Heart left ventricle (tissue), 16 donors: ENCODE measurements at regions of chr17 and their contacts with region 1.

Region 1: DNA sequence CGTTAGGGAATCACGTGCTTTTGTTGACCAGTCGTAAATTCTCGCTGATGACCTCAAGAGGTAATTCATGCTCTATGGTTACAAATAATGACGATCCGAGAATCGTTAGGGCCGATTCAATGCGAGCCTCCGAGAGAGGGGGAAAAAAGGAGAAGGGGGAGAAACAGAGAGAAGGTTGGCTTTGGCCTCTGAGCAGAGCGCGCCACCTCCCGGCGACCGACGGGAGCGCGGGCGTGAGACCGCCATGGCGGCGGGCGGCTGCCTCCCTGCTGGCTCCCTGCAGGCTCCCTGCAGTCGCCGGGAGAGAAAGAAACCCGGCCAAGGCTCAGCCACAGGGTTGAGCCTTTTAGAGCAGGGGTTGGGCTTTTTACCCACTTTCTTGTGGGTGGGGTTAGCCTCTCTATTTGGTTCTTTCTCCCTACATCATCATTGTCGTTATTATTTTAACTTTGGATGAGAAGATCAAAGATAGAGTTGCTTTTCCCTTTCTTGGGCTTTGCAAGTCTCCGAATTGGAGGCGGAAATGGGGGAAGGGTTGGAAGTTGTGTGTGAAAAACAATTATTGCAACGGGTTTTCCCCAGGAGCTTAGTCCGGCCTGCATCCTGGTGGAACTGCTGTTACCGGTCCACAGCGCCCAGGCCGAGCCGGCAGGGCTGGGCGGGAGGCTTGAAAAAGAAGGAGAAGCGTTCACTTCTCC is 410 bp upstream of the HOXB5 start:
- DNase-seq: peak; percentile 44 to 89 (median 68)
- ATAC-seq: peak in 3 of 4 donors; percentile 51 to 76 (median 62)
- H3K4me3 ChIP-seq: peak overlapping the region in 6 of 12 donors; percentile 28 to 54 (median 40)
- H3K27ac ChIP-seq: peak overlapping the region in 1 of 12 donors; percentile 97
- H3K4me1 ChIP-seq: peaks cover 0 to 47% (median 20%) of the 10 kb centered on the region in 12 donors
- H3K27me3 ChIP-seq: peaks cover 64 to 100% (median 98%) of the 10 kb centered on the region in 9 donors
- CTCF ChIP-seq: peak; percentile 66 to 87 (median 80)
- POLR2A ChIP-seq: no peak

Region 2: DNA sequence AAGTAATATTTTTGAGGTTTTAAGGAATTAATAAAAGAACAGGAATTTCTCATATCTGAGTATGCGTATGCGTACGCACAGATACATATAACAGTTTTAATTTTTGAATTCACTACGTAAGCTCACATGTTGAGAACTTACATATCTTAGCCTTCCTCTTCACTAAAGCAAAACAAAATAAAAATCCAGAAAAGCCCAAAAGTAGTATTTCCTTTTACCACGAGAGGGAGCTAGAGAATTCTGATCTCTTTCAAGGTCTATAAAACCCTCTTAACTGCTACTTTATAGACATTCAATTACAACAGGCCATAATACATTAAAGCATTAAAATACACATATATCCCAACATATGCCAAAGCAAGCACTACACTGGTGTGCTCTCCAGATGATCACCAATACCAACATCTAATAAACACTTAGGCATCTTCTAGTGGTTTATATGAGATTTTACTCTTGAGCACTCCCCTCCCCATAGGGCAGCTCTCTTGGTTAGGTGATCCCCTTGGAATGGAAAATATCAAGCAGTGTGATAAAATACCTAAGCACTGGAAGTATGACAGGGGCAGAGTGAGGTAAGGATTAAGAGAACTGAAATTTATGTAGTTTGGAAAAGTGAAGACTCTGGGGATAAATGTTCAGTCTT is 258.0 kb before region 1 on chr17:
- intact Hi-C with region 1: loop called in 2 of 10 experiments (anchors 5 kb)
- DNase-seq: no peak
- ATAC-seq: no peak
- H3K4me3 ChIP-seq: no peak overlapping the region
- H3K27ac ChIP-seq: no peak overlapping the region
- H3K4me1 ChIP-seq: no peaks in the 10 kb centered on the region
- H3K27me3 ChIP-seq: peaks cover 4 to 100% (median 57%) of the 10 kb centered on the region in 9 donors
- CTCF ChIP-seq: peak; percentile 59 to 84 (median 68)
- POLR2A ChIP-seq: no peak

Region 3: DNA sequence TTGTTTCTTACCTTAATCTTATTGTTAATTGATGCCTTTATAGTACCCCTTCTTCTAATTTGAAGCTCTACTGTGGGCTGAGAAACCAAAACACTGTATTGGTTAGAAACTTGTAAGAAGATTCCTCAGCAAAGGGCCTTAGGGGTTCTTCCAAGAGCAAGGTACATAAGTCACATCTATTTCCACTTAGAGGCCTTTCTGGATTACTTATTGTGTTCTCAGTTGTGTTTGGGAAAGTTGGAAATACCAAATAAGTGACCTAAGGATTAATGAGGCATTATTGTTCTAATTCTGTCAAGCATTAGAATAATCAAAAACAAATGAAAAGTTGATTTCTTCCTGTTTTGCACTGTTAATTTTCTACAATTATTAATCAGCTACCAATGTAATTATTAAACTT is 249.7 kb before region 1 on chr17:
- intact Hi-C with region 1: loop called in 2 of 10 experiments (anchors 5 kb)
- DNase-seq: no peak
- ATAC-seq: no peak
- H3K4me3 ChIP-seq: no peak overlapping the region
- H3K27ac ChIP-seq: no peak overlapping the region
- H3K4me1 ChIP-seq: no peaks in the 10 kb centered on the region
- H3K27me3 ChIP-seq: peaks cover 0 to 84% (median 9%) of the 10 kb centered on the region in 9 donors
- CTCF ChIP-seq: no peak
- POLR2A ChIP-seq: no peak

Region 4: GRCh38 chr17:48351831-48352332 is 242.1 kb before region 1 on chr17:
- intact Hi-C with region 1: loop called in 4 of 10 experiments (anchors 2 to 5 kb)
- DNase-seq: no peak
- ATAC-seq: no peak
- H3K4me3 ChIP-seq: no peak overlapping the region
- H3K27ac ChIP-seq: no peak overlapping the region
- H3K4me1 ChIP-seq: no peaks in the 10 kb centered on the region
- H3K27me3 ChIP-seq: peaks cover 0 to 82% (median 7%) of the 10 kb centered on the region in 9 donors
- CTCF ChIP-seq: peak; percentile 46 to 71 (median 60)
- POLR2A ChIP-seq: no peak

Region 5: DNA sequence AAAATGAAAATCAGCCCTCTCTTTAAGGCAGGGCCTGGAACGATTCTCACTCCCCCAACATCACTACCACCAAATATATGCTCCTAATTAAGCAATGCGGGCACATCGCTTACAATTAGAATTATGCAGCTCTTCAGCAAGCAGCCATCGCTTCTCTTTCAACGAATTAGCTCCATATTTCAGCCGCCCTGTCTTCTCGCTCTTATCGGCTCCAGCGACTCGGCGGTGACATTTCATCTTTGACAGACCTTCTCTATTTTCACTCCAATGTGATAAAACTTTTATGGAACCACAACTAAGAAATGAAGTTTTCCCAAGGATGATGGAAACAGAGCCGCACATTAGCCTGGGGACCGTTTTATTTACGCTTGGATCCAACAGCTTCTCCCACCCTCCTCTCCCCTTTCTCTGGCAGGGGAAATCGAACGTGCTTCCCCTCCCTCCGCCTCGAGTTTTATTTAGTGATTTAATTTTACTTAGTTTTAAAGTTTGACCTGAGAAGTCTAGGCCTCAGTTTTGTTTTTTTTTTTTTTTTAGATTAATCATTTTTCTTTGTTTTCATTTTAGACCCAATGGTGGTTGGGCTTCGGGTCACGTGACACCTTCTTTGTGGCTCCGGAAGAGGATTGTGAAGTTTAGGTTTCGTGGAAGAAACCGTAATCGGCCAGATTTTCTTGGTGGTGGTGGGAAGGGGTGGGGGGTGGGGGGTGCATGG is 46.0 kb before region 1 on chr17:
- intact Hi-C with region 1: no loop called
- DNase-seq: no peak
- ATAC-seq: no peak
- H3K4me3 ChIP-seq: peak overlapping the region in 8 of 12 donors; percentile 15 to 44 (median 22)
- H3K27ac ChIP-seq: peak overlapping the region; percentile 18 to 94 (median 76)
- H3K4me1 ChIP-seq: peaks cover 0 to 39% (median 11%) of the 10 kb centered on the region in 12 donors
- H3K27me3 ChIP-seq: peaks cover 0 to 96% (median 57%) of the 10 kb centered on the region in 9 donors
- CTCF ChIP-seq: no peak
- POLR2A ChIP-seq: no peak

Region 6: GRCh38 chr17:48663134-48663924 is 69.3 kb after region 1 on chr17:
- intact Hi-C with region 1: no loop called
- DNase-seq: no peak
- ATAC-seq: no peak
- H3K4me3 ChIP-seq: no peak overlapping the region
- H3K27ac ChIP-seq: no peak overlapping the region
- H3K4me1 ChIP-seq: no peaks in the 10 kb centered on the region
- H3K27me3 ChIP-seq: peaks cover 0 to 85% (median 23%) of the 10 kb centered on the region in 9 donors
- CTCF ChIP-seq: no peak
- POLR2A ChIP-seq: no peak